Lower lobe of right lung (tissue), 2 donors: ENCODE measurements at regions of chr18 and their contacts with region 1.

Region 1: GRCh38 chr18:32552421-32553030 is 81.8 kb upstream of the GAREM1 start:
- DNase-seq: no peak
- ATAC-seq: peak; percentile 87 to 89
- H3K4me3 ChIP-seq: no peak overlapping the region
- H3K27ac ChIP-seq: no peak overlapping the region
- H3K4me1 ChIP-seq: no peaks in the 10 kb centered on the region
- H3K27me3 ChIP-seq: peaks cover 10% of the 10 kb centered on the region
- CTCF ChIP-seq: peak; percentile 78

Region 2: GRCh38 chr18:32158108-32158624 is 394.4 kb before region 1 on chr18:
- intact Hi-C with region 1: loop called (anchors 5 kb)
- DNase-seq: peak; percentile 76
- ATAC-seq: peak; percentile 97 to 98
- H3K4me3 ChIP-seq: peak overlapping the region; percentile 38
- H3K27ac ChIP-seq: no peak overlapping the region
- H3K4me1 ChIP-seq: peaks cover 6% of the 10 kb centered on the region
- H3K27me3 ChIP-seq: no peaks in the 10 kb centered on the region
- CTCF ChIP-seq: peak; percentile 79

Region 3: DNA sequence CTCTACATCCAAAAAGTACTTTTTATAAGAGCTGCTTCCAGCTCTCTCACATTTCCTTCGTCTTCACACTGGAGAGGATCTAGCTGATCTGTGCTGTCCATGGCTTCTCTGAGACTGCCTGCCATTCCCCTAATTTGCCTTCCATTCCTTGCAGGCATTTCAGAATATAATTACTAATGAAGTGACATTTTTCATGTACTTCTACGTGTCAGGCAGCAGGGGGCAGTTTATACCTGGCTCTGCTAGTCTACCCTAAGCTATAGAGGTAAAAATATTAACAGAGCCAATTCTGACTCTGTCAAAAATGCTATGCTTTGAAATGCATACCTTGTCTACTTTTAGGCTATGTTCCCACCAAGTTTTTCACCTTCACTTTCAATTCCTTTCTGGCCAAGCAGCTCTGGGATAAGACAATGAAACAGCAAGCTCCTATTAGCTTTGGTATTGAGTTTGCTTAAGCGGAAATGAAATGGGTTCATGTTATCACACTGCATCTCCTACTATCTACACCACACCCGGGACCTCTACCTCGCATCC is 280.8 kb before region 1 on chr18:
- intact Hi-C with region 1: loop called (anchors 10 kb)
- DNase-seq: no peak
- ATAC-seq: peak; percentile 65 to 71
- H3K4me3 ChIP-seq: no peak overlapping the region
- H3K27ac ChIP-seq: no peak overlapping the region
- H3K4me1 ChIP-seq: no peaks in the 10 kb centered on the region
- H3K27me3 ChIP-seq: no peaks in the 10 kb centered on the region
- CTCF ChIP-seq: peak; percentile 54

Region 4: GRCh38 chr18:32405588-32405987 is 146.9 kb before region 1 on chr18:
- intact Hi-C with region 1: no loop called
- DNase-seq: no peak
- ATAC-seq: no peak
- H3K4me3 ChIP-seq: no peak overlapping the region
- H3K27ac ChIP-seq: no peak overlapping the region
- H3K4me1 ChIP-seq: no peaks in the 10 kb centered on the region
- H3K27me3 ChIP-seq: no peaks in the 10 kb centered on the region
- CTCF ChIP-seq: no peak

Region 5: DNA sequence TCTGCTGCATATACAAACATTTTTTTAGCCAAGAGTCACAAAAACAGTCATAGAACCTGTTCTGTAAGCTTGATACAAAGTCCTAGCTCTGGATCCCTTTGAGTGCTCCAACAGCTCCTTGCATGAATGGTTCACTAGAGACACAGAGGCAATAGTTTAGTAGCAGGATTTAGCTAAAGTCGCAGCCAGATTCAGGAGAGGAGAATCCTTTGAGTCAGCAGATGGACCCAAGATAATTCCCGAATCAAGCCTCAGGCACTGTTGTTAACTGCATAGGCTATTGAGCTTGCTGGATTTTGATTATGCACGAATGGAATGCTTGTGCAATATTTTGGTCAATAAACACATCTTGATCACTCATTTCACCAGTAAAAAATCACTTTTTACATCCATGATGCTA is 71.7 kb after region 1 on chr18:
- intact Hi-C with region 1: no loop called
- DNase-seq: no peak
- ATAC-seq: no peak
- H3K4me3 ChIP-seq: no peak overlapping the region
- H3K27ac ChIP-seq: no peak overlapping the region
- H3K4me1 ChIP-seq: no peaks in the 10 kb centered on the region
- H3K27me3 ChIP-seq: no peaks in the 10 kb centered on the region
- CTCF ChIP-seq: no peak